Activated CD4-positive, alpha-beta T cell treated with anti-CD3 and anti-CD28 coated beads, Interleukin-2, amount 10 ng/mL, durations not matched to agents 24 days and 14 days (primary cell): ENCODE measurements at regions of chr6 and their contacts with region 1.

Region 1: DNA sequence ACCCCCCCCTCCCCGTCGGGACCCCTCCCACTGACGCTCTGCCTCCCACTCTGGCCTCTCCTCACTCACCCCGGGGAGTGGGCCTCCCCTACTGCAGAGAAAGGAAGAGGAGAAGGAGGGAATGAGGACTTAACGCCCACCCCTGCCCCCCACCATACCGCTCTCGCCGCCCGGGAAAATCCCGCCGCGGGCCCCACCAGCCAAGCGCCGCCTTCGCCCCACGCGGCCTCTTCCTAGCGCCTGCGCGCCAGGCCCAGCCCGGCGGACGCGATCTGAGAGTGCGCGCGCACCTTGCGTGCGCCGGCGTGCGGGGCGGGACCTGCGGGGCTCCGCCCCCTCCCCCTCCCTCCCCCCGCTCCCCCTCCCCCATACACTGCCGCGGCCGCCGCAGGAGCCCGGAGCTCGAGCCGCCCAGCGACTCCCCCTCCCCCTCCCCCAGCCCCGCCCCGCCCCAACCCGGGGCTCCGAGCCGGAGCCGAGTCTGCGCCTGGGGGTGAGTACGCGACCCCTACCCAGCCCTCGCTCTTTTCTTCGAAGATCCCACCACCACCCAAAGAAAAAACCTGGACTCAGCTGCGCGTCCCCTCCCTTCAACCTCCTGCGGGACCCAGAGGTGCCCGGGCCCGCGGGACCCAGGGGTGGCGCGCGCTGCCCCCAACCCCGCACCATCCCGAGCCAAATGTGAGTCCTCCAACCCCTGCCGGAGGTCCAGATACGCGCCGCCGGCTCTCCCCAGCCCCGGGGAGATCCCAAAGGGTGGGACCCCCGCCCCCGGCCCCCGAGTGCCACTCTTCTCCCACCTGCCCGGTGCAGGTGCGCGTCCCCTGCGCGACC is at the starts of genes MRPL14 and TMEM63B:
- DNase-seq: peak; percentile 97
- H3K4me3 Mint-ChIP-seq: peak within 1 kb of the TSS; percentile 86
- H3K27ac Mint-ChIP-seq: peak within 1 kb of the TSS; percentile 99
- H3K4me1 Mint-ChIP-seq: peaks cover 51% of the 10 kb centered on the region
- H3K27me3 Mint-ChIP-seq: no peaks in the 10 kb centered on the region
- total RNA-seq, gene MRPL14: 65.6 and 67.5 TPM in 2 replicates
- total RNA-seq, gene TMEM63B: 17.8 and 19.7 TPM in 2 replicates

Region 2: DNA sequence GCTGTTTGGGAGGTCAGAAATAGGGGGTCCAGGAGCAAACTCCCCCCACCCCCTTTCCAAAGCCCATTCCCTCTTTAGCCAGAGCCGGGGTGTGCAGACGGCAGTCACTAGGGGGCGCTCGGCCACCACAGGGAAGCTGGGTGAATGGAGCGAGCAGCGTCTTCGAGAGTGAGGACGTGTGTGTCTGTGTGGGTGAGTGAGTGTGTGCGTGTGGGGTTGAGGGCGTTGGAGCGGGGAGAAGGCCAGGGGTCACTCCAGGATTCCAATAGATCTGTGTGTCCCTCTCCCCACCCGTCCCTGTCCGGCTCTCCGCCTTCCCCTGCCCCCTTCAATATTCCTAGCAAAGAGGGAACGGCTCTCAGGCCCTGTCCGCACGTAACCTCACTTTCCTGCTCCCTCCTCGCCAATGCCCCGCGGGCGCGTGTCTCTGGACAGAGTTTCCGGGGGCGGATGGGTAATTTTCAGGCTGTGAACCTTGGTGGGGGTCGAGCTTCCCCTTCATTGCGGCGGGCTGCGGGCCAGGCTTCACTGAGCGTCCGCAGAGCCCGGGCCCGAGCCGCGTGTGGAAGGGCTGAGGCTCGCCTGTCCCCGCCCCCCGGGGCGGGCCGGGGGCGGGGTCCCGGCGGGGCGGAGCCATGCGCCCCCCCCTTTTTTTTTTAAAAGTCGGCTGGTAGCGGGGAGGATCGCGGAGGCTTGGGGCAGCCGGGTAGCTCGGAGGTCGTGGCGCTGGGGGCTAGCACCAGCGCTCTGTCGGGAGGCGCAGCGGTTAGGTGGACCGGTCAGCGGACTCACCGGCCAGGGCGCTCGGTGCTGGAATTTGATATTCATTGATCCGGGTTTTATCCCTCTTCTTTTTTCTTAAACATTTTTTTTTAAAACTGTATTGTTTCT is 357.6 kb before region 1 on chr6 and contains the start of gene VEGFA:
- intact Hi-C with region 1: loop called (anchors 5 kb)
- DNase-seq: peak; percentile 97
- H3K4me3 Mint-ChIP-seq: peak within 1 kb of the TSS; percentile 92
- H3K27ac Mint-ChIP-seq: peak within 1 kb of the TSS; percentile 80
- H3K4me1 Mint-ChIP-seq: peaks cover 25% of the 10 kb centered on the region
- H3K27me3 Mint-ChIP-seq: peaks cover 3% of the 10 kb centered on the region
- total RNA-seq, gene VEGFA: 62.9 and 64.6 TPM in 2 replicates

Region 3: GRCh38 chr6:43883847-43884651 is 243.4 kb before region 1 on chr6:
- intact Hi-C with region 1: no loop called
- DNase-seq: no peak
- H3K4me3 Mint-ChIP-seq: no peak overlapping the region
- H3K27ac Mint-ChIP-seq: no peak overlapping the region
- H3K4me1 Mint-ChIP-seq: no peaks in the 10 kb centered on the region
- H3K27me3 Mint-ChIP-seq: peaks cover 3% of the 10 kb centered on the region

Region 4: DNA sequence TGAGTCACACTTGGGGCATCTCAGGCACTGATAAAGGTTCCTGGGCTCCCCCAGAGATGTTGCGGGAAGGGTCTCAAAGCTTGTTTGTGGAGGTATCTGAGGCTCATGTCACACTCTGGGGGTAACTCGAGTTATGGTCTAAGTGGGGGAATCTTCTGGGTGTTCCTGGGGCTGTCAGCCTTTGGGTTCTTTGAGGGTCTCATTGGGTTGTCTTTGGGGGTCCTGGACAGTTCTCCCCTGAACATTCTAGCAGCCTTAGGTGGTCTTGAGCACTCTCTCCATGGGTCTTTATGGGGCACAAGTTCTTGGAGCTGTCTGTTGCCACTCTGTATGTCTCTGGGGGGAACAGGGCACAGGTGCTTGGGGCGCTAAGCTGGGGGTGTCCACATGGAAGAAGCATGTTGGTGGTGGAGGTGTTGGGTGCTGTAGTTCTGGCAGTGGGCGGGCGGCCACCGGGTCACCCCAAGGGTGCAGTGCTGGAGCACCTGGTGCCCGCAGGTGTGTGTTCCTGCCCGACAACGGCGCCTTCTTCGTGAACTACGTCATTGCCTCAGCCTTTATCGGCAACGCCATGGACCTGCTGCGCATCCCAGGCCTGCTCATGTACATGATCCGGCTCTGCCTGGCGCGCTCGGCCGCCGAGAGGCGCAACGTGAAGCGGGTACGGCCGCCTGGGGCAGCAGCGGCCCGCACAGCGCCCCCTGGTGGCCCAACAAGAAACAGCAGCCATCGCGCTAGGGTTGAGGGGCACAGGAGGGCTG is 24.1 kb after region 1 on chr6:
- intact Hi-C with region 1: loop called (anchors 2 kb)
- DNase-seq: peak; percentile 95
- H3K4me3 Mint-ChIP-seq: peak overlapping the region; percentile 17
- H3K27ac Mint-ChIP-seq: no peak overlapping the region
- H3K4me1 Mint-ChIP-seq: peaks cover 11% of the 10 kb centered on the region
- H3K27me3 Mint-ChIP-seq: no peaks in the 10 kb centered on the region

Region 5: GRCh38 chr6:44161997-44162338 is 34.6 kb after region 1 on chr6:
- intact Hi-C with region 1: no loop called
- DNase-seq: no peak
- H3K4me3 Mint-ChIP-seq: no peak overlapping the region
- H3K27ac Mint-ChIP-seq: no peak overlapping the region
- H3K4me1 Mint-ChIP-seq: peaks cover 10% of the 10 kb centered on the region
- H3K27me3 Mint-ChIP-seq: peaks cover 15% of the 10 kb centered on the region

Region 6: GRCh38 chr6:44237813-44238433 is 110.5 kb after region 1 on chr6:
- intact Hi-C with region 1: loop called (anchors 2 kb)
- DNase-seq: peak; percentile 96
- H3K4me3 Mint-ChIP-seq: peak overlapping the region; percentile 89
- H3K27ac Mint-ChIP-seq: peak overlapping the region; percentile 98
- H3K4me1 Mint-ChIP-seq: peaks cover 33% of the 10 kb centered on the region
- H3K27me3 Mint-ChIP-seq: peaks cover 2% of the 10 kb centered on the region

Region 7: GRCh38 chr6:44387346-44388133 is 260.1 kb after region 1 on chr6 and contains the start of gene CDC5L:
- intact Hi-C with region 1: loop called (anchors 1 kb)
- DNase-seq: peak; percentile 98
- H3K4me3 Mint-ChIP-seq: peak within 1 kb of the TSS; percentile 98
- H3K27ac Mint-ChIP-seq: peak within 1 kb of the TSS; percentile 98
- H3K4me1 Mint-ChIP-seq: peaks cover 32% of the 10 kb centered on the region
- H3K27me3 Mint-ChIP-seq: peaks cover 15% of the 10 kb centered on the region
- total RNA-seq, gene CDC5L: 25.5 and 26.5 TPM in 2 replicates